PC-9 (cell line): ENCODE measurements at regions of chr17 and their contacts with region 1.

Region 1: GRCh38 chr17:44110823-44111633 is 12.4 kb downstream of the HDAC5 start:
- DNase-seq: peak; percentile 61 to 90
- H3K4me3 ChIP-seq: peak overlapping the region; percentile 17; the same call in 1 of the 2 replicates
- H3K27ac ChIP-seq: no peak overlapping the region
- H3K4me1 ChIP-seq: peaks cover 47% of the 10 kb centered on the region
- H3K27me3 ChIP-seq: no peaks in the 10 kb centered on the region
- CTCF ChIP-seq: no peak

Region 2: GRCh38 chr17:44014437-44015172 is 96.4 kb before region 1 on chr17 and contains the start of gene TMEM101:
- CTCF ChIA-PET with region 1: no interaction called
- POLR2A ChIA-PET with region 1: no interaction called
- intact Hi-C with region 1: no loop called
- DNase-seq: peak; percentile 76 to 82
- H3K4me3 ChIP-seq: peak within 1 kb of the TSS; percentile 94
- H3K27ac ChIP-seq: 0 out of 2 replicates have a peak within 1 kb of the TSS, but pooled peaks have one; percentile 29
- H3K4me1 ChIP-seq: no peaks in the 10 kb centered on the region; the same call in 1 of the 2 replicates
- H3K27me3 ChIP-seq: no peaks in the 10 kb centered on the region
- CTCF ChIP-seq: no peak
- total RNA-seq, gene TMEM101: 33.5 and 42.6 TPM in 2 replicates

Region 3: DNA sequence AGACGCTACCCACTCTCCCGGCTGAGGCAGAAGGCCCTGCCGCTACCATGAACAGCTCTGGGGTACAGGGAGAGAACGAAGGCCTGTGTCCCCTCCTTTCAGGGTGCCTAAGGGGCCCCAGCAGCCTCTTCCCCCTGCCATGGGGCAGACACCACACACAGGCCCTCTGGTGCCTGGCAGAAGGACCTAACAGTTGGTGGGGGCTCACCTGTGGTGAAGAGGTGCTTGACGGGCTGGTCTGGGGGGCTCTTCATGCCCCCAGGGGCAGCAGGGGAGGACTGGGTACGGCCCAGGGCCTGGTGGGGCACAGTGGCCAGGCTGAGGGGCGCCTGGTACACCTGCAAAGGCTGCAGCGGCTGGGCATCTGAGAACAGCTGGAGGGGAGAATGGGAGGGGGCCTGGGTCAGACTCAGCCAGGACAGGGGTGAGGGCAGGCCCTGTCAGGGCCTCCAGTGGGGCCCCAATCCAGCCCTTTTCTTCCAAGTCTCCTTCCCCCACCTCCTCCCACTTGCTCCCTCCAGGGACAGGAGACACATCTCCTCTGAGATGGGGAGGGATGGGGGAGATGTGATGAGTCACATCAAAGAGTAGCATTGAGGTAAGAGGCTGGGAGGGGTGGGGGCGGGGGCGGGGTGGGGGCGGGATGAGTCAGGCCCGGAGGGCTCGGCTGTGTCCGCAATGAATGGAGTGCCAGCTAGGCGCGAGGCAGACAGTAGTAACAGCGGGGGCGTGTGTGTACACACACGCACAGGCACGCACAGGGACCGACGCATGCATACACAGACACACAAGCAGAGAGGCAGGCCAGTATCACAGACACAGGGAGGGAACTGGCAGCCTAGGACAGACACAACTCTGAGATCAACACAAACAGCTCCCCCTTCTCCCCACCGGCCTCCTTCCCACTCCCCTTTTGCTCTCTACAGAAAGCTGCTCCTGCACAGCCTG is 24.4 kb before region 1 on chr17:
- CTCF ChIA-PET with region 1: interaction called, 22 read pairs
- POLR2A ChIA-PET with region 1: interaction called, 7 read pairs
- intact Hi-C with region 1: loop called (anchors 1 kb)
- DNase-seq: peak; percentile 56 to 58
- H3K4me3 ChIP-seq: no peak overlapping the region
- H3K27ac ChIP-seq: no peak overlapping the region
- H3K4me1 ChIP-seq: peaks cover 16% of the 10 kb centered on the region
- H3K27me3 ChIP-seq: no peaks in the 10 kb centered on the region
- CTCF ChIP-seq: no peak

Region 4: GRCh38 chr17:44095642-44096496 is 15.2 kb before region 1 on chr17:
- CTCF ChIA-PET with region 1: no interaction called
- POLR2A ChIA-PET with region 1: interaction called, 14 read pairs
- intact Hi-C with region 1: loop called (anchors 2 kb)
- DNase-seq: peak; percentile 88 to 91
- H3K4me3 ChIP-seq: peak overlapping the region; percentile 44; the same call in 1 of the 2 replicates
- H3K27ac ChIP-seq: peak overlapping the region; percentile 93
- H3K4me1 ChIP-seq: peaks cover 30% of the 10 kb centered on the region
- H3K27me3 ChIP-seq: no peaks in the 10 kb centered on the region
- CTCF ChIP-seq: no peak; the same call in 1 of the 2 replicates

Region 5: GRCh38 chr17:44123356-44124117 is 12.5 kb after region 1 on chr17 and contains the start of gene HDAC5:
- CTCF ChIA-PET with region 1: interaction called, 5 read pairs
- POLR2A ChIA-PET with region 1: interaction called, 12 read pairs
- intact Hi-C with region 1: loop called (anchors 1 kb)
- DNase-seq: peak; percentile 75 to 91
- H3K4me3 ChIP-seq: peak within 1 kb of the TSS; percentile 84
- H3K27ac ChIP-seq: peak within 1 kb of the TSS; percentile 68
- H3K4me1 ChIP-seq: peaks cover 7% of the 10 kb centered on the region
- H3K27me3 ChIP-seq: peaks cover 4% of the 10 kb centered on the region; the same call in 1 of the 2 replicates
- CTCF ChIP-seq: peak; percentile 75
- total RNA-seq, gene HDAC5: 24.0 and 40.5 TPM in 2 replicates

Region 6: DNA sequence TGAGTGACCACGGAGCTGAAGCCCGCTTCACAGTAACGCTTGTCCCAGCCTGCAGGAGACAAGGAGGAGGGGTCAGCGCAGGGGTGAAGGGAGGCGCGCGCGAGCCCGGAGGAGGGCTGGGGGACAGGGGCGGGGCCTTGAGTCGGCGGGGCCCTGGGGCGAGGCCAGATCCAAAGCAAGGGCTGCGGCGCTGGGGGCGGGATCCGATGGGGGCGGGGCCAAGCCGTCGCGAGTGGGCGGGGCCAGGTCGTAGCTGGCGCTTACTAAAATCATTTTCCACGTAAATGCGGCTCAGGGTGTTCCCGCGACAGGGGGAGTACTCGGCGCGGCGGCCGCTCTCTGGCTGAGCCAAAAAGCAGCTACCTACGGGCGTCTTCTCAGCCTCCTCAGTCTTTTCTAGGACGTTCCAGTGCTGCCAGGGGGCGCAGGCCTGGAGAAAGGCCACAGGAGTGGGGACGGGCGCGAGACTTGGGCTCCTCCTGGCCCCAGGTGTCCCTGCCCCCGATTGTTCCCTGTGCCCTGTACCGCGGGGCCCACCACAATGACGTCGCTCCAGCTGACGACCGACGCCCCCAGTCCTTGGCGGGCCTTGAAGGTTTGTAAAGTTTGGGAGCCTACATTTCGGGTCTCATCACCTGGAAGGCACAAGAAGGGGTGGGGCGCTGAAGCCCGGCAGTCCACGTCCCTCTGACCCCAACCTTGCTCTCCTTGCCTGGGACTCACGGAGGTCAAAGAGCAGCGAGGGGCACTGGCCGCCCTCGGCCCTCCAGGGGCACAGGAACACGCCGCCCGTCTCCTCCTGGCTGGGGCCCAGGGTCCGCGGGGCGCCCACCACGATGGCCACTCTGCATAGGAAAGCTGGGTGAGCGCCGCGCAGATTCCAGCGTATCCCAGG is 274.5 kb after region 1 on chr17:
- CTCF ChIA-PET with region 1: no interaction called
- POLR2A ChIA-PET with region 1: no interaction called
- intact Hi-C with region 1: no loop called
- DNase-seq: peak; percentile 57 to 86
- H3K4me3 ChIP-seq: peak overlapping the region; percentile 63
- H3K27ac ChIP-seq: no peak overlapping the region
- H3K4me1 ChIP-seq: no peaks in the 10 kb centered on the region
- H3K27me3 ChIP-seq: no peaks in the 10 kb centered on the region
- CTCF ChIP-seq: no peak